Activated CD4-positive, alpha-beta T cell treated with anti-CD3 and anti-CD28 coated beads, Interleukin-2, amount 10 ng/mL, durations not matched to agents 24 days and 14 days (primary cell): ENCODE measurements at regions of chr12 and their contacts with region 1.

Region 1: DNA sequence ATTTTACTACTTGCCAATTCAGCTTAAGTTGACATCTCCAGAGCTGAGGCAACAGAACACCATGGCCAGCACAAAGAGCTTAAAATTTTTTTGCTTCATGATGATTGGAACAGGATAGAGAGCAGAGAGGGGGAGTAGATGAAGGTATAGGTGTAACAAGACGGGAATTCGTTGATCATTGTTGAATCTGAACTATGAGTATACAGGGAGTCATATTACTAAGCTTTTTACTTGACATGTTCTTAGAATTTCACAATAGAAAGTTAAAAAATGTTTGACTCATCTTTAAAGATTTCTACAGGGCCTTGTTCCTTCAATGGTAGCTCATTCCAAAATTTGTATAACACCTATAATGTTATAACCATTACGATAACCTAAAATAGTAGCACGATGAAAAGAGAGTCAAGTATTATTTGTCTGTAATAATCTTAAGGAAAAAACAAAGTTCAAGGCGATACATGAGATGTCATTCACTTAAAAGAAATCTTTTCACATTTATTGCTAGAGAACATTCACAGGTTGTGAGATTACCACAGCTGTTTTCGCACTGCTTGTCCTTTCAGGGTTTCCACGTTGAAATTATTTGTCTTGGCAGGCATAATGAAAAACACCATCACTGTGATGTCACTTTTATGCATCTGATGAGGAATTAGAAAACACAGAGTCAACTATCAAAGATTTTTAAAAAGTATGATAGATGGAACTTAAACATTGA is 33.9 kb downstream of the SPX start:
- DNase-seq: no peak
- H3K4me3 Mint-ChIP-seq: no peak overlapping the region
- H3K27ac Mint-ChIP-seq: peak overlapping the region; percentile 67
- H3K4me1 Mint-ChIP-seq: peaks cover 5% of the 10 kb centered on the region
- H3K27me3 Mint-ChIP-seq: no peaks in the 10 kb centered on the region

Region 2: DNA sequence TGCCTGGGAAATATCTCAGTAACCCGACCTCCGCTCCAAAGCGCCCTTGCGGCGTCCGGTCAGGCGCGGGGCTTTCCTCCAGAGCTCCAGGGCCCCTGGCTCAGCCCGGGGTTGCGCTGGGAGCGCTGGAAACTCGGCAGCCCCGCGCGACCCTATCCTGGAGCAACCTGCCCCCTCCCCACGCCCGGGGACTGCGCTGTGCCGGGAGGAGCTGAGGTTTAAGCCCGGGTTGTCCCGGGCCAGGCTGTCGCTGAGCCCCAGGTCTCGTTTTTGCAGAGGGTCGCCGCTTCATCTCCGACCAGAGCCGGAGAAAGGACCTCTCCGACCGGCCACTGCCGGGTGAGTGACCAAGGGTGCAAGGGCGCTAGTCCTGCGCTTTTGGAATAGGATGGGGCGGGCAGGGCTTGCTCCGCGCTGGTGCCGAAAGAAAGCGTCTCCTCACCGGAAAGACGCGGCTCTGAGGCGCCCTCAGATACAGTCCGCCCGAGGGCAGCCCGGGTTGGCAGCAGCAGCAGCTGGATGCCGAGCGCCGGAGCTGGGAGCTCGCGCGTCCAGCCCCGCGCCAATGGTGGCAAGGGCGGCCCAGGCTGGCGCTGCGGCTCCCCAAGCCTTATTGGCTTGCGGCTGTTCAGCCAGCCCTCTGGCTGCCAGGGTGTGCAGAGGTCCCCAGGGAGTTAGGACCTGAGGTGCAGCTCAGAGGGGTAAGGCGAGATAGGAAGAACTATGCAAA is 32.4 kb before region 1 on chr12:
- intact Hi-C with region 1: loop called (anchors 5 kb)
- DNase-seq: peak; percentile 90
- H3K4me3 Mint-ChIP-seq: peak overlapping the region; percentile 71
- H3K27ac Mint-ChIP-seq: no peak overlapping the region
- H3K4me1 Mint-ChIP-seq: peaks cover 3% of the 10 kb centered on the region
- H3K27me3 Mint-ChIP-seq: peaks cover 42% of the 10 kb centered on the region

Region 3: DNA sequence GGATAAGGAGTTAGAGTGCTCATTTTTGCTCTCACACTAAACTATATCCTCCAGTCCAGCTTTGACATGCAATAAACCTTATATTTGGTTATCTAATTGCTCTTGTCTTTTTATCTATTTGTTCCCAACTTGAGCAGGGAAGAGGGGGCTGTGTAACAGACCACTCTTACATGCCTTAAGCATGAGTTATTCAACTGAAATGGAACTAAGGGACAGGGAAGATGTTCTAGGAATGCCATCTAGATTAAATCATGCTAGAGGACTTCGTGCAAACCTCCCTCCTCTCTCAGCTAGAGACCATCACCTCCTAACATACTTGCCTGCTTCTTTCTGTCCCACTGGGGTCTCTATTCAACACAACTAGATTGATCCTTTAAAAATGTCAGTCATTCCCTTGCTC is 13.3 kb before region 1 on chr12:
- intact Hi-C with region 1: loop called (anchors 2 kb)
- DNase-seq: no peak
- H3K4me3 Mint-ChIP-seq: no peak overlapping the region
- H3K27ac Mint-ChIP-seq: no peak overlapping the region
- H3K4me1 Mint-ChIP-seq: peaks cover 5% of the 10 kb centered on the region
- H3K27me3 Mint-ChIP-seq: peaks cover 2% of the 10 kb centered on the region